Sciatic nerve (tissue), 2 donors: ENCODE measurements at regions of chr1 and their contacts with region 1.

Region 1: DNA sequence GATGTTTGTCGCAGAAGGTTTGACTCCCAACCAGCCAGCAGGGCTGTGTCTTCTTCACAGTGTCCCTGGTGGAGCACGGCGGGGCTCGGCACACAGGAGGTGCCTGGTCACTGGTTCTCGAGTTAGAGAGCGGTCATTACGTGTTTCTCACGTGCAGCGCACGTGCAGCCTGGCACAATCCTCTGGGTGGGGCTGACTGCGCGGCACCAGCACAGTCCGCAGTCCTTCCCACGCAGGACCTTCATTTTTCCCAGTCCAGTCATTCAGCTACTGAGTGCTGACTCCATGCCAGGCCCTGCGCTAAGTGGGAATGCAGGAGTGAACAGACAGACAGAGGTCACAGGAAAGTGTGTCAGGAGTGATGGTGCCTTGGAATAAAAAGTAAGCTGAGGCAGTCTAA is 46.2 kb upstream of the GPR153 start:
- DNase-seq: no peak
- ATAC-seq: no peak

Region 2: GRCh38 chr1:5617546-5617945 is 689.6 kb before region 1 on chr1:
- intact Hi-C with region 1: loop called (anchors 5 kb)
- DNase-seq: no peak
- ATAC-seq: no peak

Region 3: DNA sequence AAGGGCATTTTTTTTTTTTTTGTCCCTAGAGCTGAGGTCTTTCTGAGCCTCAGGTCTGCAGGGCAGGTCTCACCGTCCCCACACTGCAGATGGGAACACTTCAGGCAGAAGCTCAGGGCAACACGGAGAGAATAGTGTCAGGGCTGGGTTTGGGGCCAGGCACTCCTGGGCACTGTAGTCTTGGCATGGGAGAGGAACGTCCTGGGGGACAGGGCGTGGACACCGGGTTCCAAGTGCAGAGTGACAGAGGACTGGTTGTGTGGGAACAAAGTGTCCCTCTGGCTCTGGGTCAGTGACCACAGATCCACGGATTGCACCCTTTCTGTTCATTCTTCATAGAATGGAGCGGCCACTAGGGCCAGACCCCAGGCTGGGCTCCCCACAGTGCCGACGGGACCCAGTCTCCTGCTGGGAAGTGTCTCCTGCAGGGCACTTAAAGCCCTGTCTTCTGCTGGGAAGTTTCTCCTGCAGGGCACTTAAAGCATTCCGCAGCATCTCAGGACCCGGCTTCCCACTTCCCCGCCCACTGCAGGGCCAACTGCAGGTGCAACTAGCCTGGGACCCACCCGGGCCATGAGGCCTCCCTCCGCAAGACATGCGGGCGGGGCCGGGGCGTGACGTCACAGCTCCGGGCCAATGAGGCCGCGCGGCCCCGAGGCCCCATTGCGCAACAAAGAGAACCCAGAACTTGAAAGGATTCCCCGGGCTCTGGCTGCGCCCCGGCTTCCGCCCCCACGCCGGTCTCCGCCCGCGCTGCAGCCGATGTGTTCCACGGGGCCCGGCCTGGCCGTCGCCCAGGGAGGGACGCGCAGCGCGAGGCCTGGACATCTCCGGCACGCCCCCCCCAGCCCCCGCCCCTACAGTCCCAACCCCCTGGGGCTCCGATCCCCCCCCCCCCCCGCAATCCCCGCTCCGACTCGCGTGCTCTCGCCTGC is 47.3 kb before region 1 on chr1:
- intact Hi-C with region 1: no loop called
- DNase-seq: peak; percentile 90
- ATAC-seq: peak; percentile 87